Activated CD8-positive, alpha-beta memory T cell treated with anti-CD3 and anti-CD28 coated beads, Interleukin-2, amount 10 ng/mL, durations not matched to agents 7 days and 5 days (primary cell): ENCODE measurements at regions of chr20 and their contacts with region 1.

Region 1: DNA sequence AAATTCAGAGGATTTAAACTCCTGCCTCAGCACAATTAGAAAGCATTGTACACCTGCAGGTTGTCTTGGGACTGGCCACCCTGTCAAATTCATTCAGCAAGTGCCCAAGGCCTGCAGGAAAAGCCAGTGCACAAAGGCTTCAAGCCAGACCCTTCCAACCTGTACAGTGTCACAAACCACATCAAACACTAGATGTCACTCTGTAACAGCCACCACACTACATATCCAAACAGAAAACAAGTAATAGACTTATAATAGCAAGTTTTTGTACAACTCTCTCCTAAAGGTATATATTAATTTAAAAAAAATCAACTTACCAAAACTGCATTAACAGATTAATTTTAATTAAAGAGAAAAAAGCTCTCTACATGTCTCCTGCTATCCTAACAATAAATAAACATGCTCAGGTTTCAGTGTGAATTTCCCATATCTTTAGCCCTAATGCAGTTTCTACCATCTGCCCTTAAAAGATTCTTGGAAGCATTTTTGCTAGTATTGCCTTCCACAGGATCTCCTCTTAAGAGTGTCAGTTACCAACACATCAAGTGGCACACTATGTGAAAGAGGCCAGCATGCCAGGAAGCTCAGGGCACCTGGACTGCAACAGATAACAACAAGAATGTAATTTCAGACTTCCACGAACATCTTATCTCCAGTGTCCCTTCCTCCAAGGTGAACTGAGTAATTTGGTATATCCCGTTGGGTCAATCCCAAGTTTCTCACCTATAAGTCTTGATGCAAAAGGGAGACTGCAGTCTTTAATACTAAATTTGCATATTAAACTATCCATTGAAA is 47.5 kb downstream of the RALGAPA2 start:
- DNase-seq: no peak
- ATAC-seq: peak; percentile 76
- H3K4me3 Mint-ChIP-seq: no peak overlapping the region
- H3K27ac Mint-ChIP-seq: no peak overlapping the region
- H3K4me1 Mint-ChIP-seq: peaks cover 9% of the 10 kb centered on the region
- H3K27me3 Mint-ChIP-seq: no peaks in the 10 kb centered on the region

Region 2: DNA sequence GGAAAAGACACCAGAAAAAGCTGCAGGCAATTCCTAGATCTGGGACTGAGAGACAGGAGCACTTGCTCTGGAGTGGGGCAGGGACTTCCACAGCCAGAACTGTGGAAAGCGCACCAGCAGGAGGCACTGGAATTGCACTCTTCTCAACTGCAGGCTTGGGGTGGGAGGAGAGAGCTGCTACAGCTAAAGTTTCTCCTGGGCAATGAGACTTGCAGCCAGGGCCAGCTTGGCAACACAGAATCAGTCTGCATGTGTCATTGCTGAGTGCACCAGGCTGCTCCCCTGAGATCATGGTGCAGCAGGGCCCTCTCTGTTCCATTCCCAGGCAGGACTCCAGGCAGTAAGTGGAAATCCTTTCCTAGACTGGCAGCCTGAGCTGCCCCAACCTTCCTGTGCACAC is 151.3 kb before region 1 on chr20:
- CTCF ChIA-PET with region 1: no interaction called
- DNase-seq: no peak
- ATAC-seq: no peak
- H3K4me3 Mint-ChIP-seq: no peak overlapping the region
- H3K27ac Mint-ChIP-seq: no peak overlapping the region
- H3K4me1 Mint-ChIP-seq: no peaks in the 10 kb centered on the region
- H3K27me3 Mint-ChIP-seq: no peaks in the 10 kb centered on the region

Region 3: GRCh38 chr20:20824924-20825584 is 160.1 kb after region 1 on chr20:
- CTCF ChIA-PET with region 1: interaction called, 18 read pairs
- DNase-seq: peak; percentile 65
- ATAC-seq: peak; percentile 53
- H3K4me3 Mint-ChIP-seq: no peak overlapping the region
- H3K27ac Mint-ChIP-seq: no peak overlapping the region
- H3K4me1 Mint-ChIP-seq: peaks cover 2% of the 10 kb centered on the region
- H3K27me3 Mint-ChIP-seq: peaks cover 8% of the 10 kb centered on the region